Posterior vena cava (tissue), 2 donors: ENCODE measurements at regions of chr16 and their contacts with region 1.

Region 1: DNA sequence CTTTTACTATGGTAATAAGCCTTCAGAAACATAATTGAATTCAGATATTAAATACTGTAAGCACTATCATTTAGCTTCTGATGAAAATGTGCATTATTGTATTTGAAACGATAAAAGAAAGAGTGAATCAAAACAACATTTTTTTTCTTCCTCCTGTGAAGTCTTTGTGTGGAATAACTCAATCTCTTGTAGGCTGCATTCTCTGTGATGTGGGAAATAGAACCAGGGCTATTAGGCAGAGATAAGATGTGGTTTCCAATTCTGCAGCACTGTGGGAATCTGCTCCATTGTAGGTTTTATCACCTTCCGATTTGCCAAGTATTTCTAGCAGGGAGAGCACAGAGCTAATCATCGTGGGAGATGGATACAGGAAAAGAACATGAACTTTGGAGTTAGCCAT is 624.5 kb downstream of the RBFOX1 start:
- DNase-seq: no peak

Region 2: DNA sequence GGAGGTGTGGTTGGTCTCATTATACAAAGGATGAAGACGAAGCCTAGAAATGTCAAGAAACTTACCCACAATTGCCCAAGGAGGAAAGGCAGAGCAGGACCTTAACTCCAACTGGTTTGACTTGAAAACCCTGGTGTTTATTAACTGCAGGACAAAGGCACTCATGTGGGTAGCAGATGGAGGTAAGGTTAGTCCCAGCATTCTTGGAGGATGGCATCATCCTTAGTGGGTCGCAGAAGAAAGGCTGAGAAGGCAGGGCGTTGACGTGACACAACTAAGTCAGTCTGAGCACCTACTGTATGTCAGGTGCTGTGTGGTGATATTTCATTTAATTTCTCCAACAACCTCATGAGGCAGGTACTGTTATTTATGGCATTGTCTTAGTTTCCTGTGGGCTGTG is 1235.6 kb after region 1 on chr16:
- intact Hi-C with region 1: loop called in 1 of 2 experiments (anchors 10 kb)
- DNase-seq: no peak